Naive thymus-derived CD4-positive, alpha-beta T cell (primary cell): ENCODE measurements at regions of chr4 and their contacts with region 1.

Region 1: GRCh38 chr4:173334085-173334772 is at the start of gene HMGB2:
- DNase-seq: peak; percentile 96 to 100 (median 100)
- ATAC-seq: peak; percentile 97
- H3K4me3 ChIP-seq: peak within 1 kb of the TSS; percentile 89
- H3K4me3 Mint-ChIP-seq: peak within 1 kb of the TSS; percentile 93 to 100 (median 99)
- H3K27ac ChIP-seq: peak within 1 kb of the TSS; percentile 98
- H3K27ac Mint-ChIP-seq: peak within 1 kb of the TSS; percentile 97 to 100 (median 99)
- H3K4me1 ChIP-seq: peaks cover 7 to 18% of the 10 kb centered on the region in 2 donors
- H3K4me1 Mint-ChIP-seq: peaks cover 20 to 55% (median 30%) of the 10 kb centered on the region in 7 donors
- H3K27me3 ChIP-seq: no peaks in the 10 kb centered on the region
- H3K27me3 Mint-ChIP-seq: peaks cover 6 to 18% (median 11%) of the 10 kb centered on the region in 5 donors
- total RNA-seq, gene HMGB2: 89.3 to 542 (median 106) TPM

Region 2: GRCh38 chr4:173288296-173288695 is 45.9 kb before region 1 on chr4:
- CTCF ChIA-PET with region 1: no interaction called
- POLR2A ChIA-PET with region 1: interaction called, 3 read pairs
- intact Hi-C with region 1: loop called in 1 of 2 experiments (anchors 2 kb)
- DNase-seq: peak; percentile 22 to 68 (median 44)
- ATAC-seq: peak; percentile 63
- H3K4me3 ChIP-seq: no peak overlapping the region
- H3K4me3 Mint-ChIP-seq: peak overlapping the region in 7 of 10 donors; percentile 15 to 83 (median 55)
- H3K27ac ChIP-seq: no peak overlapping the region
- H3K27ac Mint-ChIP-seq: peak overlapping the region in 5 of 9 donors; percentile 5 to 81 (median 23)
- H3K4me1 ChIP-seq: peaks cover 0 to 6% of the 10 kb centered on the region in 2 donors
- H3K4me1 Mint-ChIP-seq: peaks cover 9 to 22% (median 16%) of the 10 kb centered on the region in 7 donors
- H3K27me3 ChIP-seq: no peaks in the 10 kb centered on the region
- H3K27me3 Mint-ChIP-seq: no peaks in the 10 kb centered on the region

Region 3: GRCh38 chr4:173370477-173371291 is 36.5 kb after region 1 on chr4 and contains the start of gene SAP30:
- CTCF ChIA-PET with region 1: interaction called, 8 read pairs
- POLR2A ChIA-PET with region 1: interaction called, 209 read pairs
- intact Hi-C with region 1: loop called (anchors 1 kb)
- DNase-seq: peak; percentile 88 to 97 (median 91)
- ATAC-seq: peak; percentile 91
- H3K4me3 ChIP-seq: peak within 1 kb of the TSS; percentile 99
- H3K4me3 Mint-ChIP-seq: peak within 1 kb of the TSS; percentile 89 to 100 (median 98)
- H3K27ac ChIP-seq: peak within 1 kb of the TSS; percentile 82
- H3K27ac Mint-ChIP-seq: peak within 1 kb of the TSS; percentile 88 to 99 (median 97)
- H3K4me1 ChIP-seq: peaks cover 5 to 20% of the 10 kb centered on the region in 2 donors
- H3K4me1 Mint-ChIP-seq: peaks cover 14 to 46% (median 18%) of the 10 kb centered on the region in 7 donors
- H3K27me3 ChIP-seq: peaks cover 0 to 10% of the 10 kb centered on the region in 2 donors
- H3K27me3 Mint-ChIP-seq: peaks cover 2 to 29% (median 17%) of the 10 kb centered on the region in 5 donors
- total RNA-seq, gene SAP30: 0.48 to 27.4 (median 1.1) TPM

Region 4: DNA sequence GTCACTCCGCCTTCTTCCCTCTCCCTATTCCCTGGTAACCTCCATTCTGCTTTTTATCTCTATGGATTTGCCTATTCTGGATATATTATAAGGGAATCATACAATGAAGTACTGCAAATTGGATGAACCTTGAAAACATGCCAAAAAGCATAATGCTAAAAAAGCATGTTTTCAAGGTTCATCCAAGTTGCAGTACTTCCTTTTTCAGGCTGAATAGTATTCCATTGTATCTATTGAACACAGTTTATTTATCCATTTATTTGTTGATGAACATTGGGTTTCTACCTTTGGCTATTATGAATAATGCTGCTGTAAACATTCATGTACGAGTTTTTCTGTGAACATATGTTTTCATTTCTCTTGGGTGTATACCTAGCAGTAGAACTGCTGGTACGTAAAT is 45.7 kb after region 1 on chr4:
- CTCF ChIA-PET with region 1: interaction called, 3 read pairs
- POLR2A ChIA-PET with region 1: interaction called, 209 read pairs
- intact Hi-C with region 1: no loop called
- DNase-seq: no peak
- ATAC-seq: no peak
- H3K4me3 ChIP-seq: no peak overlapping the region
- H3K4me3 Mint-ChIP-seq: no peak overlapping the region
- H3K27ac ChIP-seq: no peak overlapping the region
- H3K27ac Mint-ChIP-seq: no peak overlapping the region
- H3K4me1 ChIP-seq: no peaks in the 10 kb centered on the region
- H3K4me1 Mint-ChIP-seq: peaks cover 0 to 13% (median 0%) of the 10 kb centered on the region in 7 donors
- H3K27me3 ChIP-seq: peaks cover 0 to 8% of the 10 kb centered on the region in 2 donors
- H3K27me3 Mint-ChIP-seq: peaks cover 4 to 45% (median 23%) of the 10 kb centered on the region in 5 donors

Region 5: DNA sequence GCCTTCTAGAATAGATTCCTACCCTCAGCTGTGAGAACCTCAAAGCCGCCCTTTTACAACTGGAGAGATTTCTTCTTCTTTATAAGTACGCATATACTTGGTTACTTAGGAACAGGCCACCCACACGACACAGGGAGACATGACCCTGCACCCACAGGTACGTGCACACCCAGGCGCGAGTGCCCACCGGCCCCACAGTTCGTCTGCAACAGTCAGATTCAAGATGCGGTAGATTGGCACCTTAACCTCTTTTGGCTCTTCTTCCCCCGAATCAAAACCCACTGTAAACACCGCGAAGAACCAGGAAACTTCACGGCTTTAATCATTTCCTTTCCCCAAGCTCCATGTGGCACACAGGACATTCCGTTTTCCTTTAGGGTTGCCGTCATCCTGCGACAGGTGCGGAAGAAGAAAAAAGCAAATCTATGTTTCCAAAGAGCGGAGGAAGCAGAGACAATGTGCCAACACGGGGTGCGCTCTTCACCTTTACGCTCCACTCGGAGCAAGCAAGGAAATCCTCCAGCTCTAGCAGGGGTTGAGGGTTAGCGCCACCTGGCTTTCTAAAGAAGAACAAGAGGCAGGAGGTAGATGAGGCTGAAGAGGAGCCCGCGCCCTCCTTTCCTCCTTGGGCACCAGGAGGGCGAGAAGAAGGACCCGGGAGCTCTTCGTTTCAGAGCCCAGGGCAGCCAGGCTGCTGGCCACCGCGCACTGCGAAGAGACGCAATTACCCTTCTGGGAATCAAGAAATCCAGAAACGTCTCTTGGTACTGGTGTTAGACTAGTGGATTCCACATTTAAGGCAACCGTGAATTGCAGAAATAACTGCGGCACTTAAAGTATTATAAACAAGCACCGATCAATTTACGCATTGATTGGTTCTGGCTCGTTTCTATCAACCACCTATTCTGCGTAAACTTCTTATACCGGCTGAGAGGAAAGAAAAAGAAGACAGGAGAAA is 160.1 kb after region 1 on chr4:
- CTCF ChIA-PET with region 1: no interaction called
- POLR2A ChIA-PET with region 1: interaction called, 3 read pairs
- intact Hi-C with region 1: loop called in 1 of 2 experiments (anchors 1 kb)
- DNase-seq: peak in 8 of 9 donors; percentile 43 to 71 (median 56)
- ATAC-seq: peak; percentile 96
- H3K4me3 ChIP-seq: peak overlapping the region; percentile 44
- H3K4me3 Mint-ChIP-seq: peak overlapping the region; percentile 74 to 92 (median 85)
- H3K27ac ChIP-seq: no peak overlapping the region
- H3K27ac Mint-ChIP-seq: peak overlapping the region in 1 of 9 donors; percentile 50
- H3K4me1 ChIP-seq: peaks cover 3 to 9% of the 10 kb centered on the region in 2 donors
- H3K4me1 Mint-ChIP-seq: peaks cover 9 to 35% (median 15%) of the 10 kb centered on the region in 7 donors
- H3K27me3 ChIP-seq: no peaks in the 10 kb centered on the region
- H3K27me3 Mint-ChIP-seq: peaks cover 40 to 71% (median 50%) of the 10 kb centered on the region in 5 donors